ENCODE measurements at regions of chr5 and their contacts with region 1.

Region 1: DNA sequence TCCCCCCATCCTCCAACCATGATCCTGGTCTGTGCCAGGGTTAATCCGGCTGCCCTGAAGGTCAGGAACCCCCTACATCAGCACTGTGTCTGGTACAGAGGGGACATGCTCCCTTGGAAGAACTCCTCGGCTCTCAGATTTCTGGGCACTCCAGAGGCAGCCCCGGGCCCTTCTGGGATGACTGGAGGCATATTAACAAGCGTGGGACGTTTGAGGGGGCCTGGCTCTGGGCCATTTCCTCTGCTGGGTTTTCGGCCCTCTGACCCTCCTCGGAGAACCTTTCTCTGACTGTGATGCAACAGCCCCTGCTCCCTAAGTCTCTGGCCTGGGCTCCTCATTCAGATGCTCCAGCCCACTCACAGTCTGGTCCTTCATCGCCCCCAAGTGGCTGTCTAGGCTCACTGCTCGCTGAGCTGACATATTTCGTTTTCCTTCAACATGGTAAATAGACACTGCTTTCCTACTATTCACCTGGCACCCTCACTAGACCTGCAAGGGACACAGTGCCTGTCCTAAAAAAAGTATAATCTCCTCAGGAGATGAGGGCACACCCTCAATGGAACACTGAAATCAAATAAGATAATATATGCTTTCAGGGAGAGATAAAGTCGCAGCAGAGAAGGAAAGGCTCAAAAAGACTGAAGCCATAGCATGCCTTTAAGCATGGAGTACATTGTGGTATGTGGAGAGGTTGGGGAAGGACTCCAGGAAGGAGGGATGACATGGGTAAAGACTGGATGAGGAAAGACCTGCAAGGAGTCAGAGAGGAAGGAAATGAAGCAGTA is 404.7 kb upstream of the TRPC7 start:
- DNase-seq: peak; percentile 53 to 81
- H3K4me3 ChIP-seq: no peak overlapping the region
- H3K4me1 ChIP-seq: peaks cover 2% of the 10 kb centered on the region; the same call in 1 of the 2 replicates
- H3K27me3 ChIP-seq: no peaks in the 10 kb centered on the region

Region 2: DNA sequence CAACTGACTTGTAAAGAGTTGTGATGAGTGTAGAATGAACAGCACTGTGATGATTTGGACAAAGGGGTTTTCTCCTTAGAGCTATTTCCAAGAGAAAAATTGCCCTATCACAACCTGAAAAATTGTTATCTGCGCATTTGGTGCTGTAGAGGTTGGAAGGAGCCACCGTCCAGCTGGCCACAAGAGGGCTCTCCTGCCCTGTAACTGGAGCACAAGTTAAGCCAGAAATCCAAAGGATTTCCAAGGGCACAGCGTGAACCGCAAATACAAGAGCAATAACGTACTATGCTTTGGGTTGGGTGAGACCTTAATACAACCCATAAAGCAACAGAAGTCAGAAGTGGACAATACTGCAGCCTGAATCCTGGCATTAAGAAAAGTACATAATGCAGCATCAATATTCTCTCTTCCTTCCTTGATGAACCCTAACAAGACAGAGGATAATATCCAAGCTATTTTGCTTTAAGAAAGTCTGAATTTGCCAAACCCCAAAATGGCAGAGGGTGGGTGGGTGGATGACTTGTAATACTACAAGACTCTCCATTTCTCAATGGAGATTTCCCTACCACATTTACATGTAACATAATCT is 520.3 kb before region 1 on chr5:
- in situ Hi-C with region 1: loop called (anchors 10 kb)
- DNase-seq: peak; percentile 67 to 73
- H3K4me3 ChIP-seq: no peak overlapping the region
- H3K4me1 ChIP-seq: no peaks in the 10 kb centered on the region
- H3K27me3 ChIP-seq: peaks cover 19% of the 10 kb centered on the region

Region 3: GRCh38 chr5:136374003-136374402 is 396.1 kb before region 1 on chr5:
- in situ Hi-C with region 1: loop called (anchors 25 kb)
- DNase-seq: no peak
- H3K4me3 ChIP-seq: no peak overlapping the region
- H3K4me1 ChIP-seq: no peaks in the 10 kb centered on the region
- H3K27me3 ChIP-seq: no peaks in the 10 kb centered on the region

Measured in HAP-1 (cell line).